ENCODE measurements at regions of chr9 and their contacts with region 1.

Region 1: GRCh38 chr9:32431940-32432555 is 47.6 kb downstream of the ACO1 start:
- DNase-seq: peak; percentile 11 to 35 (median 22)
- ATAC-seq: peak; percentile 60
- H3K4me3 ChIP-seq: no peak overlapping the region
- H3K4me3 Mint-ChIP-seq: no peak overlapping the region
- H3K27ac ChIP-seq: no peak overlapping the region
- H3K27ac Mint-ChIP-seq: peak overlapping the region in 1 of 9 donors; percentile 71
- H3K4me1 ChIP-seq: no peaks in the 10 kb centered on the region
- H3K4me1 Mint-ChIP-seq: peaks cover 0 to 5% (median 0%) of the 10 kb centered on the region in 7 donors
- H3K27me3 ChIP-seq: no peaks in the 10 kb centered on the region
- H3K27me3 Mint-ChIP-seq: no peaks in the 10 kb centered on the region

Region 2: GRCh38 chr9:32497921-32498320 is 65.9 kb after region 1 on chr9:
- CTCF ChIA-PET with region 1: no interaction called
- POLR2A ChIA-PET with region 1: no interaction called
- intact Hi-C with region 1: no loop called
- DNase-seq: no peak
- ATAC-seq: no peak
- H3K4me3 ChIP-seq: no peak overlapping the region
- H3K4me3 Mint-ChIP-seq: no peak overlapping the region
- H3K27ac ChIP-seq: no peak overlapping the region
- H3K27ac Mint-ChIP-seq: peak overlapping the region in 3 of 9 donors; percentile 19 to 83 (median 23)
- H3K4me1 ChIP-seq: no peaks in the 10 kb centered on the region
- H3K4me1 Mint-ChIP-seq: peaks cover 0 to 10% (median 4%) of the 10 kb centered on the region in 7 donors
- H3K27me3 ChIP-seq: no peaks in the 10 kb centered on the region
- H3K27me3 Mint-ChIP-seq: no peaks in the 10 kb centered on the region

Region 3: GRCh38 chr9:32571969-32572899 is 140.2 kb after region 1 on chr9:
- CTCF ChIA-PET with region 1: no interaction called
- POLR2A ChIA-PET with region 1: no interaction called
- intact Hi-C with region 1: loop called in 1 of 2 experiments (anchors 1 kb)
- DNase-seq: peak; percentile 33 to 85 (median 77)
- ATAC-seq: peak; percentile 92
- H3K4me3 ChIP-seq: peak overlapping the region; percentile 92
- H3K4me3 Mint-ChIP-seq: peak overlapping the region; percentile 98 to 100 (median 99)
- H3K27ac ChIP-seq: peak overlapping the region; percentile 86
- H3K27ac Mint-ChIP-seq: peak overlapping the region; percentile 93 to 99 (median 99)
- H3K4me1 ChIP-seq: peaks cover 14 to 22% of the 10 kb centered on the region in 2 donors
- H3K4me1 Mint-ChIP-seq: peaks cover 18 to 43% (median 30%) of the 10 kb centered on the region in 7 donors
- H3K27me3 ChIP-seq: no peaks in the 10 kb centered on the region
- H3K27me3 Mint-ChIP-seq: peaks cover 0 to 10% (median 0%) of the 10 kb centered on the region in 5 donors

Measured in naive thymus-derived CD4-positive, alpha-beta T cell (primary cell).